OCI-LY7 (cell line): ENCODE measurements at regions of chr18 and their contacts with region 1.

Region 1: DNA sequence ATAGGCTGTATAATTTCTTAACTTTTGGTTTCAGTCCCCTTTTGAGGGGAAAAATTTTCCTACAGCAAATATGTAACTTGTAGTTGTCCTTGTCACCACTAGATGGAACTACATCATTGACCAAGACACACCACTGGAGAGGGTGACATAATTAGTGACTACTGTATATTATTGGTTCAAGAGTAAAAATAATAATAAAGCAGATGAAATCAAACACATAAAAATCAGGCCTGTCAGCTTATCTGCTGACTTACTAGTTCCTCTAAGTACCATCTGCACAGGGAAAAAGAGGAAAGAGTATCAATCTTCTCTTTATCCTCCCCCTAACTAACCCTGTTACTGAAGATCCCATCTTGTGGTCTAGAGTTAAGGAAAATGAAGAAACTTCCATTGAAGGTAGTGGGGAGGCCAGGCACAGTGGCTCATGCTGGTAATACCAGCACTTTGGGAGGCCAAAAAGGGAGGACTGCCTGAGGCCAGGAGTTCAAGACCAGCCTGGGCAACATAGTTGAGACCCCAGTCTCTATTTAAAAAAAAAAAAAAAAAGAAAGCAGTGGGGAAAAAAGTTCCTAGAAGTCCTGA is 29.6 kb upstream of the ENOSF1 start:
- DNase-seq: peak; percentile 46
- H3K4me3 ChIP-seq: no peak overlapping the region
- H3K27ac ChIP-seq: no peak overlapping the region
- H3K4me1 ChIP-seq: no peaks in the 10 kb centered on the region
- CTCF ChIP-seq: peak; percentile 85

Region 2: DNA sequence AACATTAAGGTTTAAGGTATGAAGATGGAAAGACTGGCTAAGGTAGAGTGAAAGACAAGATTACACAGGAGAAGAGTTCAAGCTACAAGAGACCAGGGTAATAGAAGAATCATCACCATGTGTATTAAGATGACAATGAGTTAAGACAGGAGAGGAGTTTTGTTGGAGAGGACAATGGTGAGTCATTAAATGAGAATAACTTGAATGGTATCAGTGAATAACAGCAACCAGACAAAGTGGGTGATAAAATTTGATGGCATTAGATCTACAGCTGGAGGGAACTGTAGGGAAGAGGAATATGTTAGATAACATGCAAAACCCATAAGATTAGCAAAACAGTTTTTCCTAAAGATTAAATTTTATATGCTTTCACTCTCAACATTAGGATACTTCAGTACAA is 10.8 kb before region 1 on chr18:
- CTCF ChIA-PET with region 1: no interaction called
- POLR2A ChIA-PET with region 1: no interaction called
- intact Hi-C with region 1: no loop called
- DNase-seq: no peak
- H3K4me3 ChIP-seq: no peak overlapping the region
- H3K27ac ChIP-seq: no peak overlapping the region
- H3K4me1 ChIP-seq: no peaks in the 10 kb centered on the region
- CTCF ChIP-seq: no peak

Region 3: DNA sequence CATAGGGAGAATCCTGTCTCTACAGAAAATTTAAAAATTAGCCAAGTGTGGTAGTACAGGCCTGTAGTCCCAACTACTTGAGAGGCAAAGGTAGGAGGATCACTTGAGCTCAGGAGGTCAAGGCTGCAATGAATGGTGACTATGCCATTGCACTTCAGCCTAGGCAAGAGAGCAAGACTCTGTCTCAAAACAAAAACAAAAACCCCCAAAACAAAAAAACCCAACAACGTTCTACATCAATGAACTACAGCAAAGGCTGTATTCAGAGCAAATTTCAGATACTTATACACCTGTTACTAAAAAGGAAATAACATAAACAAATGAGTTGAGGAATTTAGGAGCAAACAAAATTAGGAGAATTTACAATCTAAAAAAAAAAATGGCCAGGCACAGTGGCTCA is 47.4 kb after region 1 on chr18:
- CTCF ChIA-PET with region 1: no interaction called
- POLR2A ChIA-PET with region 1: no interaction called
- intact Hi-C with region 1: no loop called
- DNase-seq: no peak
- H3K4me3 ChIP-seq: no peak overlapping the region
- H3K27ac ChIP-seq: no peak overlapping the region
- H3K4me1 ChIP-seq: no peaks in the 10 kb centered on the region
- CTCF ChIP-seq: no peak

Region 4: DNA sequence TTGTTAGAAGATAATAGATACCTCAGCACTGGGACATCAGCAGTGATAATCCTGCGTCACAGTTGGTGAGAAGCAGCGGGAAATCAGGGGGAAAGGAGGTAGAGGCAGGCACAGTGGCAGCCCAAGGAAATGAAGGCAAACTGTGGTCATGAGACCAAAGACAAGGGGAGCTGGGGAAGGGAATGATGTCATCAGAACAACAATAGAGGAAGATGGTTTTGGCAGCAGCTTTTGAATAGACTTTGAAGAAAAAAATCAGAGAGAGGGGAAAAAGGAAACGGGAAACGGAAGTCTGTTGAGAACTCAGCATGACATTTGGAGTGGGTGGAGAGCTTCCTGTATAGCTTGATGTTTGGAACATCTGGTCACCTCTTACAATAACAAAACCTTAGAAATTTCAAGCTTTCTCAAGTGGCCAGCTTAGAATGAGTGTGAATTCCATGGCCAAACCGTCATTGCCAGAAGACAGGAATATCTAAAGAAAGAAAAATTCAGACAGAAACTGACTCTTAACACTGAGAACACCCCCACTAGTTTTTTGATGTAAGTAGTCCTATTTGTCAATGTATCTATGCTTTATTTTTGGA is 88.4 kb after region 1 on chr18:
- CTCF ChIA-PET with region 1: no interaction called
- POLR2A ChIA-PET with region 1: interaction called, 4 read pairs
- intact Hi-C with region 1: loop called (anchors 2 kb)
- DNase-seq: peak; percentile 23
- H3K4me3 ChIP-seq: no peak overlapping the region
- H3K27ac ChIP-seq: no peak overlapping the region
- H3K4me1 ChIP-seq: peaks cover 6% of the 10 kb centered on the region
- CTCF ChIP-seq: no peak

Region 5: GRCh38 chr18:839224-840022 is 97.4 kb after region 1 on chr18:
- CTCF ChIA-PET with region 1: interaction called, 3 read pairs
- POLR2A ChIA-PET with region 1: no interaction called
- intact Hi-C with region 1: loop called (anchors 2 kb)
- DNase-seq: peak; percentile 72
- H3K4me3 ChIP-seq: no peak overlapping the region
- H3K27ac ChIP-seq: no peak overlapping the region
- H3K4me1 ChIP-seq: no peaks in the 10 kb centered on the region
- CTCF ChIP-seq: peak; percentile 92